Transverse colon (tissue), 4 donors: ENCODE measurements at regions of chr1 and their contacts with region 1.

Region 1: DNA sequence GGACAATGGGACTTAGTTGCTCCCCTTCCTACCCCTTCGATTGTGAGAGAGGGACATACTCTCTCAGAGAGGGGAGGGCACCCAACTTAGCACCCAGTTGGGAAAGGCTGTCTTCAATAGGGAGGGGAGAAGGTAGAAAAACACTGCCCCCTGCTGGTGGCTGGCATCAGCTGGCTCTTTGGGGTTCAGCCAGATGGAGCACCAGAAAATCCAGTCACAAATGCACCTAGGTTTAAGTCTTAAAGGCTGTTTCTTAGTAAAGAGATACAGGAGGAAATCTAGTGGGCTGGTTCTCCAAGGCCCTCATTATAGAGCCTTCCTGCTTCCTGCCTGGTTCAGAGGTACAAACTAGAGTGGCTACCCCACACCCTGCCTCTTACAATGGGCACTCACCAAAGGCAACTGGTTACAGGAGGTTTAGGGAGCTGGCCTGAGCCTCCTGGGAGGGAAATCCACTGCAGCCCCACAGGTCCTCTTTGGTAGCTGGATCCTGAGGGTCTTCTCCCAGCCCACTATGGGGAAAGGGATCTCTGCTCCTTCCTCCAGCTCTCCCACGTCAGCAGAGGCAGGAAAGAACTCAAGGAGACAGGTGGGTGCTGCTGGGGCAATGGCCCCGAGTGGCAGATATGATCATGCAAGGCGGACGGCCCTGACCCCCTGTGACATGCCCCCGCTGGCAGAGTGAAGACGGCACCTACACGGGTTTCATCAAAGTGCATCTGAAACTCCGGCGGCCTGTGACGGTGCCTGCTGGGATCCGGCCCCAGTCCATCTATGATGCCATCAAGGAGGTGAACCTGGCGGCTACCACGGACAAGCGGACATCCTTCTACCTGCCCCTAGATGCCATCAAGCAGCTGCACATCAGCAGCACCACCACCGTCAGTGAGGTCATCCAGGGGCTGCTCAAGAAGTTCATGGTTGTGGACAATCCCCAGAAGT is 28.3 kb downstream of the EIF2D start:
- DNase-seq: peak; percentile 82
- H3K4me3 ChIP-seq: no peak overlapping the region
- H3K27ac ChIP-seq: no peak overlapping the region
- H3K4me1 ChIP-seq: peaks cover 0 to 17% (median 0%) of the 10 kb centered on the region in 4 donors
- H3K27me3 ChIP-seq: no peaks in the 10 kb centered on the region
- CTCF ChIP-seq: peak; percentile 88 to 94 (median 89)
- EP300 ChIP-seq: no peak
- POLR2A ChIP-seq: no peak

Region 2: DNA sequence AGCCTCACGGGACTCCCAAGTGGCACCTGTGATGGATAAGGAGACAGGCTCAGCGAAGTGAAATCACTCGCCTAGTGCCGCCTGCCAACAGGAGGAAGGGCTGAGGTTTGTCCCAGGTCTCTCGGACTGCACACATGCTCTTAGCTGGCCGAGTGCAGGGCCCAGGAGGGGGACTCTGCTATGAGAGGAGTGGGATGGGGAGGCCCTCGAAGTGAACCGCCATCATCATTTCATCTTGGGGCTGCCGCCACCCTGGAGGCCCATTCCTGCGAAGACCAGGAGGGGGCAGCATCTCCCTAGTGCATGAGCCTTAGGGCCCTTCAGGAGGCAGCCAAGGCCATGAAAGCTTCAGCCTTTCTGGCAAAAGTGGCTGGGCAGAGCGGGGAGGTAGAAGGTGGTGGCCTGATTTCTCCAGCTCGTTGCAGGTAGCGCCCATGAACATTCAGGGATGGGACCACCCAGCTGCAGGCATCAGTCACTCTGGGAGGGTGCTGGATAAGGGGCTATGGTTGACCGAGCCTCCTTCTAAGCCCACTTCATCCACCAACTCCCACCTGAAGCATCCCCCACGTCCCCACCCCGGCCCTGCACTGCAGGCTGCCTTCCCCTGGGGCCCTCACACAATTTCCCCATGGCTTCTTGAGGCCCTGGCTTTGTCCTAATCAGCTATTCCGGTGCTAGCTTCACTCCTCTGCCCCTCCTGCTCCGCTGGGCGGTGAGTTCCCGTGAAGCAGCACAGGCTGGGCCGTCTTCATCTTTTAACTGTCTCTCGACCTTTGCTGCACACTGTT is 93.8 kb before region 1 on chr1:
- in situ Hi-C with region 1: loop called (anchors 10 to 25 kb)
- intact Hi-C with region 1: loop called (anchors 5 kb)
- DNase-seq: peak; percentile 71
- H3K4me3 ChIP-seq: no peak overlapping the region
- H3K27ac ChIP-seq: no peak overlapping the region
- H3K4me1 ChIP-seq: peaks cover 0 to 3% (median 1%) of the 10 kb centered on the region in 4 donors
- H3K27me3 ChIP-seq: no peaks in the 10 kb centered on the region
- CTCF ChIP-seq: peak; percentile 80 to 92 (median 85)
- EP300 ChIP-seq: no peak
- POLR2A ChIP-seq: no peak

Region 3: DNA sequence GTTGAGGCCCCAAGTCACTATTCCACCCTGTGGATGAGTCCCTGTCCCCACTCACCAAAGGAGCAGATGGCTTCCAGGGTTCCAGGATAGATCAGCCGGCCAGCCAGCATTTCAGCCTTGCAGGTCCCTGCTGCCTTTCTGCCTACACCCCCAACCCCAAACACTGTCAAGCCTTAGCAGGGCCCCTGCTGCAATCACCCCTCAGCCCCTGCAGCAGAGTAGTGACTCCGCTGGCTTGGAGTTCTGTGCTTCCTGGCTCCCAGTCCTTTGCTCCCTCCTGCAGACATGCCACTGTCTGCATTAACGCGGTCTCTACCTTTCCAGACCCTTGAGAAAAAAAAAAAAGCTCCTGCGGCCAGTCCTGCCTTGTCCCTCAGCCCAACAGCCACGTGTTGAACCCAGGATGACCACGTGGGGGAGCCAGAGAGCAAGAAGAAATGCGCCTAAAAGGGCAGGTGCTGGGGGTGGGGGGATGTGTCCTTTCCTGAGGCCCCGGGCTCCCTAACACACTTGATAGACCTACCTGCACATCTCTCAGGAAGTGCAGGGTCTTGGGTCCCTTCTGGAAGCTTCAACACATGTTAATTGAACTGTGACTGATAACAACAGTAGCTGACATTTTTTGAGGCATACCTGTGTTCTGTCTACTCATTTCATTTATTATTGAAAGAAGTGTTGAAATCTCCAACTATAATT is 39.3 kb before region 1 on chr1:
- in situ Hi-C with region 1: loop called in 2 of 4 experiments (anchors 5 kb)
- intact Hi-C with region 1: no loop called
- DNase-seq: peak; percentile 82
- H3K4me3 ChIP-seq: no peak overlapping the region
- H3K27ac ChIP-seq: no peak overlapping the region
- H3K4me1 ChIP-seq: peaks cover 4 to 11% (median 10%) of the 10 kb centered on the region in 4 donors
- H3K27me3 ChIP-seq: no peaks in the 10 kb centered on the region
- CTCF ChIP-seq: peak; percentile 72 to 88 (median 86)
- EP300 ChIP-seq: no peak
- POLR2A ChIP-seq: no peak